PC-3 (cell line): ENCODE measurements at regions of chr1 and their contacts with region 1.

Region 1: DNA sequence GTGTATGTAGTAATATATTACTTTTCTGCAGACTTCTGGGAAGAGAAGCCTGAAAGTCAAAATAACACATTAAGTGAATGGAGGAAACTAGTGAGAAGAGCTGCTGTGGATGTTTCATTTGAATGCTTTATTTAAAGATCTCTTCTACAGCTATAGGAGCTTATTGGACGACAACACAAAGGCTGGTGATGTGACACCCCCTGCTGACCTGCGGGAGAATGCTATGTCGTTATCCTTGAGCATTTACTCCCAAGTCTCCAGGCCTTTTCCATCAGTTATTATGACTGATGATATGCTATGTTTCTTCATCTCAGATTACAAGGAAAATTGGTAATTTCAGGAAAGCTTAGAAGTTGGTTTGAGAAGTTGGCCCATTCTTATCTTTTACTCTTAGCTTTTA is 22.3 kb upstream of the PLA2G4A start:
- DNase-seq: peak; percentile 68
- ATAC-seq: peak; percentile 86
- H3K4me3 ChIP-seq: no peak overlapping the region
- H3K27ac ChIP-seq: 0 out of 2 replicates have a peak overlapping the region, but pooled peaks have one; percentile 14
- H3K4me1 ChIP-seq: no peaks in the 10 kb centered on the region
- H3K27me3 ChIP-seq: no peaks in the 10 kb centered on the region
- CTCF ChIP-seq: peak; percentile 73

Region 2: GRCh38 chr1:186404454-186405051 is 401.9 kb before region 1 on chr1:
- CTCF ChIA-PET with region 1: no interaction called
- POLR2A ChIA-PET with region 1: no interaction called
- intact Hi-C with region 1: loop called (anchors 5 kb)
- DNase-seq: peak; percentile 52
- ATAC-seq: no peak
- H3K4me3 ChIP-seq: no peak overlapping the region
- H3K27ac ChIP-seq: no peak overlapping the region
- H3K4me1 ChIP-seq: no peaks in the 10 kb centered on the region
- H3K27me3 ChIP-seq: no peaks in the 10 kb centered on the region
- CTCF ChIP-seq: peak; percentile 73

Region 3: GRCh38 chr1:186605762-186606350 is 200.6 kb before region 1 on chr1:
- CTCF ChIA-PET with region 1: interaction called, 6 read pairs
- POLR2A ChIA-PET with region 1: no interaction called
- intact Hi-C with region 1: loop called (anchors 2 kb)
- DNase-seq: peak; percentile 57
- ATAC-seq: peak; percentile 56; the same call in 1 of the 2 replicates
- H3K4me3 ChIP-seq: no peak overlapping the region
- H3K27ac ChIP-seq: peak overlapping the region; percentile 11; the same call in 1 of the 2 replicates
- H3K4me1 ChIP-seq: no peaks in the 10 kb centered on the region
- H3K27me3 ChIP-seq: no peaks in the 10 kb centered on the region
- CTCF ChIP-seq: peak; percentile 79

Region 4: GRCh38 chr1:186722711-186723309 is 83.7 kb before region 1 on chr1:
- CTCF ChIA-PET with region 1: interaction called, 6 read pairs
- POLR2A ChIA-PET with region 1: no interaction called
- intact Hi-C with region 1: loop called (anchors 2 kb)
- DNase-seq: peak; percentile 57
- ATAC-seq: no peak
- H3K4me3 ChIP-seq: no peak overlapping the region
- H3K27ac ChIP-seq: no peak overlapping the region
- H3K4me1 ChIP-seq: no peaks in the 10 kb centered on the region
- H3K27me3 ChIP-seq: no peaks in the 10 kb centered on the region
- CTCF ChIP-seq: peak; percentile 70

Region 5: GRCh38 chr1:186775881-186776560 is 30.5 kb before region 1 on chr1:
- CTCF ChIA-PET with region 1: no interaction called
- POLR2A ChIA-PET with region 1: no interaction called
- intact Hi-C with region 1: no loop called
- DNase-seq: no peak
- ATAC-seq: no peak
- H3K4me3 ChIP-seq: no peak overlapping the region
- H3K27ac ChIP-seq: no peak overlapping the region
- H3K4me1 ChIP-seq: no peaks in the 10 kb centered on the region
- H3K27me3 ChIP-seq: no peaks in the 10 kb centered on the region
- CTCF ChIP-seq: no peak

Region 6: DNA sequence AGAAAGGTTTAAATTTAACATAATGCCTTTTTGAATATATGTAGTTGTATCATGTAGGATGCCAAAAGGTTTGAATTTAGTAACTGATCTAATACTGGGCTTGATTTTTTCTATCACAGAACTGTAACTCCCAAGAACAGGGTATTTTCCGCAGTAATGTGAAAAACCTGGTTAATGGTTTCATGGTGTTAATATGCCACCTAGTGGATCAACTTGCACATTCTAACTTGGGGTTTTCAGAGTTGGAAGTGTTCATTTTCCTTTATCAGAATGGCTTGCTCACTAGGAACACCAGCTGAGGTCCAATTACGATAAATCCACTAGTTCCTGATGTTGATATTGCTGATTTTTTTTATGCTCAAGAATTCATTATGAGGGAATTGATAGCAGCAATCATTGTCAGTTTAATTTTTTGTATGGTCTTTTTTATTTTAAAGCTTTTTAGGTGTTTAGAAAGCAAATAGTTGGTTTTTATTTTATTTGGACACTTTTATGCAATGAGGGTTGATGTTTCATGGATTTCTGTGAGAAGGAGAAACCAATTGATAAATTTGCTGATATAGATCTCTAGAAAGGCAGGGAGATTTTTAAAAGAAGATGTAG is 179.5 kb after region 1 on chr1:
- CTCF ChIA-PET with region 1: interaction called, 3 read pairs
- POLR2A ChIA-PET with region 1: no interaction called
- intact Hi-C with region 1: loop called (anchors 5 kb)
- DNase-seq: peak; percentile 73
- ATAC-seq: peak; percentile 59
- H3K4me3 ChIP-seq: no peak overlapping the region
- H3K27ac ChIP-seq: no peak overlapping the region
- H3K4me1 ChIP-seq: no peaks in the 10 kb centered on the region
- H3K27me3 ChIP-seq: no peaks in the 10 kb centered on the region
- CTCF ChIP-seq: peak; percentile 77